Ovary (tissue), 10 donors: ENCODE measurements at regions of chr3 and their contacts with region 1.

Region 1: GRCh38 chr3:32781210-32781968 is 36.4 kb upstream of the TRIM71 start:
- DNase-seq: peak; percentile 44 to 81 (median 65)
- H3K4me3 ChIP-seq: peak overlapping the region; percentile 41
- H3K27ac ChIP-seq: no peak overlapping the region
- H3K4me1 ChIP-seq: peaks cover 2% of the 10 kb centered on the region
- H3K27me3 ChIP-seq: no peaks in the 10 kb centered on the region
- CTCF ChIP-seq: peak; percentile 31 to 50 (median 38)
- EP300 ChIP-seq: no peak
- POLR2A ChIP-seq: no peak

Region 2: GRCh38 chr3:32510075-32510724 is 271.2 kb before region 1 on chr3:
- intact Hi-C with region 1: loop called in 1 of 4 experiments (anchors 5 kb)
- DNase-seq: peak; percentile 50 to 73 (median 61)
- H3K4me3 ChIP-seq: no peak overlapping the region
- H3K27ac ChIP-seq: no peak overlapping the region
- H3K4me1 ChIP-seq: no peaks in the 10 kb centered on the region
- H3K27me3 ChIP-seq: no peaks in the 10 kb centered on the region
- CTCF ChIP-seq: peak; percentile 43 to 65 (median 62)
- EP300 ChIP-seq: no peak
- POLR2A ChIP-seq: no peak